Caco-2 (cell line): ENCODE measurements at regions of chr17 and their contacts with region 1.

Region 1: DNA sequence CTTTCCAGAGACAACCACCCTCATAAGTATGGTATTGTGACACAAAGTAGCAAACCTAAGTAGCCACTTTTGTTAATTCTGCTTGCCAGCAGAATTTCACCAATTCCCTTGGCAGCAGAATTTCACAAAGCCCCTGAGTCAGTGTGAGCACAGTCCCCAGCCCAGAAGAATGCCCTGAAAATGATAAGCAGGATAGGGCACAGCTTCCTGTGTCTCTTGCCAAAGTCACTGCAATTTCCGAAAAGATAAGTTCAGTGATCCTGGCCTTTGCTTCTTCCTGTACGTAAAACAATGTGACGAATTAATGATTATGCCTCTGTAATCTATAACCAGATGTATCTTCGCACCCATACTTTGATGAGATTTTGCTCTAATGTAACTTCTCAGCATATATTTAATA is 16.0 kb upstream of the WIPF2 start:
- DNase-seq: no peak
- H3K4me3 ChIP-seq: no peak overlapping the region
- H3K4me3 Mint-ChIP-seq: no peak overlapping the region
- H3K27ac Mint-ChIP-seq: no peak overlapping the region
- H3K4me1 ChIP-seq: 0 out of 2 replicates have a peak, but pooled peaks cover 4% of the 10 kb centered on the region
- H3K4me1 Mint-ChIP-seq: no peaks in the 10 kb centered on the region
- H3K27me3 ChIP-seq: no peaks in the 10 kb centered on the region
- H3K27me3 Mint-ChIP-seq: no peaks in the 10 kb centered on the region
- CTCF ChIP-seq: no peak

Region 2: GRCh38 chr17:40287494-40288369 is 84.6 kb after region 1 on chr17 and contains the start of gene CDC6:
- CTCF ChIA-PET with region 1: interaction called, 8 read pairs
- POLR2A ChIA-PET with region 1: no interaction called
- intact Hi-C with region 1: loop called (anchors 1 kb)
- DNase-seq: peak; percentile 99 to 100
- H3K4me3 ChIP-seq: peak within 1 kb of the TSS; percentile 90
- H3K4me3 Mint-ChIP-seq: peak within 1 kb of the TSS; percentile 95
- H3K27ac Mint-ChIP-seq: peak within 1 kb of the TSS; percentile 96
- H3K4me1 ChIP-seq: peaks cover 21% of the 10 kb centered on the region
- H3K4me1 Mint-ChIP-seq: peaks cover 7% of the 10 kb centered on the region
- H3K27me3 ChIP-seq: no peaks in the 10 kb centered on the region
- H3K27me3 Mint-ChIP-seq: no peaks in the 10 kb centered on the region
- CTCF ChIP-seq: no peak
- total RNA-seq, gene CDC6: 86.1 and 96.4 TPM in 2 replicates